CD4-positive, alpha-beta T cell (primary cell): ENCODE measurements at regions of chr12 and their contacts with region 1.

Region 1: DNA sequence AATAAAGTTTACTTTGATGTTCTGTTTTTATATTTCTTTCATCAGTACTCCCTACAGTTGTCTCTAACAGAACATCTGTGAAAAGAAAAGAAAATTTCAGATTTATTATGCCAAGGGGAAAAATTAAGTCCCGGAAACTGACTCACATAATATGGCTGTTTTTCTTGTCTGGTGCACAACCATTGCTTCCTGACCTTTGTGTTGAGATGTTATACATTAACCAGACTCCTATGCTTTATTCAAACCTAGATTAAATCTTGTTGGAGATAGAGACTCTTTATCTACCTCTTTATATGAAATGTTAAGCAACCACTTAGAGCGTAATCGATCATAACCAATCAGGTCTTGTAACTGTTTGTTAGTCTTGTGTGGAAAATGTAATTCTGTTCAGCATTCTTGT is 37.6 kb upstream of the BICD1 start:
- DNase-seq: no peak
- ATAC-seq: no peak
- H3K4me3 ChIP-seq: no peak overlapping the region
- H3K4me3 Mint-ChIP-seq: no peak overlapping the region
- H3K27ac ChIP-seq: no peak overlapping the region
- H3K27ac Mint-ChIP-seq: no peak overlapping the region
- H3K4me1 ChIP-seq: no peaks in the 10 kb centered on the region
- H3K4me1 Mint-ChIP-seq: no peaks in the 10 kb centered on the region
- H3K27me3 ChIP-seq: no peaks in the 10 kb centered on the region
- H3K27me3 Mint-ChIP-seq: no peaks in the 10 kb centered on the region
- CTCF ChIP-seq: no peak

Region 2: GRCh38 chr12:32051559-32052414 is 17.3 kb before region 1 on chr12:
- CTCF ChIA-PET with region 1: no interaction called
- POLR2A ChIA-PET with region 1: no interaction called
- intact Hi-C with region 1: loop called in 1 of 2 experiments (anchors 1 kb)
- DNase-seq: peak in 2 of 14 experiments; percentile 23 to 39
- ATAC-seq: no peak
- H3K4me3 ChIP-seq: no peak overlapping the region
- H3K4me3 Mint-ChIP-seq: no peak overlapping the region
- H3K27ac ChIP-seq: no peak overlapping the region
- H3K27ac Mint-ChIP-seq: no peak overlapping the region
- H3K4me1 ChIP-seq: peaks cover 3% of the 10 kb centered on the region
- H3K4me1 Mint-ChIP-seq: peaks cover 7% of the 10 kb centered on the region
- H3K27me3 ChIP-seq: no peaks in the 10 kb centered on the region
- H3K27me3 Mint-ChIP-seq: no peaks in the 10 kb centered on the region
- CTCF ChIP-seq: no peak

Region 3: DNA sequence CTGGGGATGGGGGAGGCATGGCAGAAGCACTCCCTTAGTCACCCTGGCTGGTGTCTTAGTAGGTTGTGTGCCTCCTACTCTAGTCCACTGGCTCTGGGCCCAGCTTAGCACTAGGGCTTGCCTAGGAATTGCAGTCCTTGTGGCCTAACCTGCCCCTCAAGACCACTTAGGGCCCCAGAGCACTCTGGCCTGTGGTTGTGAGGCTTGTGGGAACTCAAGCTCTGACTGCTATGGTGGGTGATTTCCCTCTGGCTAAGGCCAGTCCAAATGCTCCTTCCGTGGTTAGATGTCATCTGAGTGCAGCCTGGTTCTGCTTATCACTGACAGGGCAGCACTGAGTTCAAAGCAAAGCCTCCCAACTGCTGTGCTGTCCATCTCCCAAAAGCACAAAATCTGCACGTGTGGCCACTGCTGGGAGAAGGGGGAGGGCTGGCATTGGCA is 350.5 kb after region 1 on chr12:
- CTCF ChIA-PET with region 1: no interaction called
- POLR2A ChIA-PET with region 1: no interaction called
- intact Hi-C with region 1: no loop called
- DNase-seq: no peak
- ATAC-seq: no peak
- H3K4me3 ChIP-seq: no peak overlapping the region
- H3K4me3 Mint-ChIP-seq: no peak overlapping the region
- H3K27ac ChIP-seq: no peak overlapping the region
- H3K27ac Mint-ChIP-seq: no peak overlapping the region
- H3K4me1 ChIP-seq: no peaks in the 10 kb centered on the region
- H3K4me1 Mint-ChIP-seq: no peaks in the 10 kb centered on the region
- H3K27me3 ChIP-seq: no peaks in the 10 kb centered on the region
- H3K27me3 Mint-ChIP-seq: peaks cover 3% of the 10 kb centered on the region
- CTCF ChIP-seq: no peak

Region 4: DNA sequence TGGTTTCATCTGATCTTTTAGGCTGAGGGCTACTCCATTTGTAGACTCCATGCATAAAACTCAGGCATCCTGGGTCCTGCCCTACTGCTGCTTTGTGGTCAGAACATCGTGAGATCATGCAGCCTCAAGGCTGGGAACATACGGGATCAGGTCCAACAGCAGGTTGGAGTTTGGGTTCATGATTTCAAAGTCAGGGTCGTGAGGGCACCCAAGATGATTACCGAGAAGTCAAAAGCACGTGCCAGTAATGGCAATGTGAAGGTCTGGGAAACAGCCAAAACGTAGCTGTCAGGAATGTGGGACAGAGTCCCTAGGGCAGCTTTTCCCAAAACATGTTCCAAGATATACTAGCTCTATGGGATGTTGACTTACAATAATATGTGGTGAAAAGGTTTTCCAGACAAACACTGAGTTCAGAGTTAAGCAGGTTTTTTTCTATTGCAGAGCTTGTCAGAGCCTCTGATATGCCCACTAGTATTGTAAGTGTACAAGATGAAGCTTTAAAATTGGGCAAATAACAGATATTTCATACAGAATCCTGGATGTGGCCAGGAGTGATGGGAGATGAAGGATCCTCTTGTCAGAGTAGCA is 479.7 kb after region 1 on chr12:
- CTCF ChIA-PET with region 1: no interaction called
- POLR2A ChIA-PET with region 1: no interaction called
- intact Hi-C with region 1: no loop called
- DNase-seq: no peak
- ATAC-seq: no peak
- H3K4me3 ChIP-seq: no peak overlapping the region
- H3K4me3 Mint-ChIP-seq: no peak overlapping the region
- H3K27ac ChIP-seq: no peak overlapping the region
- H3K27ac Mint-ChIP-seq: no peak overlapping the region
- H3K4me1 ChIP-seq: no peaks in the 10 kb centered on the region
- H3K4me1 Mint-ChIP-seq: no peaks in the 10 kb centered on the region
- H3K27me3 ChIP-seq: no peaks in the 10 kb centered on the region
- H3K27me3 Mint-ChIP-seq: no peaks in the 10 kb centered on the region
- CTCF ChIP-seq: no peak